Activated CD4-positive, alpha-beta memory T cell treated with anti-CD3 and anti-CD28 coated beads, Interleukin-2, amount 10 ng/mL, durations not matched to agents 7 days and 5 days (primary cell): ENCODE measurements at regions of chr3 and their contacts with region 1.

Region 1: GRCh38 chr3:97821810-97822775 is at the start of gene CRYBG3:
- DNase-seq: peak; percentile 89
- H3K4me3 Mint-ChIP-seq: peak within 1 kb of the TSS; percentile 93
- H3K27ac Mint-ChIP-seq: peak within 1 kb of the TSS; percentile 84
- H3K4me1 Mint-ChIP-seq: peaks cover 40% of the 10 kb centered on the region
- H3K27me3 Mint-ChIP-seq: peaks cover 19% of the 10 kb centered on the region
- total RNA-seq, gene CRYBG3: 12.8 to 13.1 TPM

Region 2: DNA sequence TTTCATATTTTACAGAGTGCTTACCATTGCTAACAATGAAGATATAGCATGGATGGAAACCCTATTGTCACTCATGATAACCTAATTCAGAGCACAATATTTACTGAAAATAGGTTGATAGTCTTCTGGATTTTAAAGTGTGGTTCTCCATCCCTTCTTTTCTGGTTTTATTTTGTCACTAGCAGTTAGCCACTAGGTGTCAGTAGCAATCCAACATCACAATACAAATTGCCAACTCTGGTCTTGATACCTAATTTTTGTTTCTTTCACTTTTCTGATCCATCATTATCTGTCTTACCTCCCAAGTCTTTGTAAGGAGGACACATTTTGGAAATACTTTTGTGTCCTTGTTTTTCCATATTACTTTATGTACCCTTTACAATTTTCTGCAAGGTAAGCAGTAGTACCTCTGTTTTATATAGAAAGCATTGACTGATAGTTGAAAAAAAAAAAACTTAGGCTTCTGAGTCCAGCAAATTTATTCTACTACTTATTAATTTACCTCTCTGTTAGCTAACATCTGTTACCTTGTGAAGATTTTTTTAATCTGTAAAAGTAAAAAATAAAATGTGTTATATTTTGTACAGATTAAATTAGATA is 28.6 kb before region 1 on chr3:
- CTCF ChIA-PET with region 1: interaction called, 10 read pairs
- POLR2A ChIA-PET with region 1: interaction called, 10 read pairs
- DNase-seq: no peak
- H3K4me3 Mint-ChIP-seq: no peak overlapping the region
- H3K27ac Mint-ChIP-seq: no peak overlapping the region
- H3K4me1 Mint-ChIP-seq: peaks cover 3% of the 10 kb centered on the region
- H3K27me3 Mint-ChIP-seq: no peaks in the 10 kb centered on the region

Region 3: GRCh38 chr3:97871801-97872524 is 49.9 kb after region 1 on chr3:
- CTCF ChIA-PET with region 1: interaction called, 9 read pairs
- POLR2A ChIA-PET with region 1: interaction called, 11 read pairs
- DNase-seq: peak; percentile 41
- H3K4me3 Mint-ChIP-seq: peak overlapping the region; percentile 7
- H3K27ac Mint-ChIP-seq: peak overlapping the region; percentile 70
- H3K4me1 Mint-ChIP-seq: peaks cover 25% of the 10 kb centered on the region
- H3K27me3 Mint-ChIP-seq: no peaks in the 10 kb centered on the region

Region 4: DNA sequence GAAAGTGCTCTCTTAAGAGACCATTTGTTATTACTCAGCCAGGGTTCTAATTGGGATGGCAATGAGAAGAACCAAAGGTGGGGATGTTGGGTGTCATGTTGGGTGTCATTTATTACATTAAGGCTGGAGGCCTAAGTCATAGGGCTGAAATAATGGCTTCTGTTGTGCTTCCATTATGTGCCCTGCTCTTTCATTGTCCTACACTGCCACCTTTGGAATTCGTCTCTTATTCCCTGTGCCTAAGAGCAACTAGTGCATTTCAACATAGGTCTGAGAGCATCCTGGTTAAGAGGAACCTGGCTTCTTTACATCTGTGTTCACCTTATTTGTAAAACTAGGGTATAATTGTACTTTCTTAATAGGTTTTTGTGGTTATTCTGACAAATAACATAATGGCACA is 117.9 kb after region 1 on chr3:
- CTCF ChIA-PET with region 1: no interaction called
- POLR2A ChIA-PET with region 1: interaction called, 16 read pairs
- DNase-seq: no peak
- H3K4me3 Mint-ChIP-seq: no peak overlapping the region
- H3K27ac Mint-ChIP-seq: no peak overlapping the region
- H3K4me1 Mint-ChIP-seq: peaks cover 22% of the 10 kb centered on the region
- H3K27me3 Mint-ChIP-seq: no peaks in the 10 kb centered on the region

Region 5: GRCh38 chr3:97971677-97972567 is 149.8 kb after region 1 on chr3 and contains the start of gene RIOX2:
- CTCF ChIA-PET with region 1: interaction called, 17 read pairs
- POLR2A ChIA-PET with region 1: interaction called, 56 read pairs
- DNase-seq: peak; percentile 86
- H3K4me3 Mint-ChIP-seq: peak within 1 kb of the TSS; percentile 86
- H3K27ac Mint-ChIP-seq: peak within 1 kb of the TSS; percentile 93
- H3K4me1 Mint-ChIP-seq: peaks cover 77% of the 10 kb centered on the region
- H3K27me3 Mint-ChIP-seq: no peaks in the 10 kb centered on the region
- total RNA-seq, gene RIOX2: 46.5 to 46.7 TPM

Region 6: DNA sequence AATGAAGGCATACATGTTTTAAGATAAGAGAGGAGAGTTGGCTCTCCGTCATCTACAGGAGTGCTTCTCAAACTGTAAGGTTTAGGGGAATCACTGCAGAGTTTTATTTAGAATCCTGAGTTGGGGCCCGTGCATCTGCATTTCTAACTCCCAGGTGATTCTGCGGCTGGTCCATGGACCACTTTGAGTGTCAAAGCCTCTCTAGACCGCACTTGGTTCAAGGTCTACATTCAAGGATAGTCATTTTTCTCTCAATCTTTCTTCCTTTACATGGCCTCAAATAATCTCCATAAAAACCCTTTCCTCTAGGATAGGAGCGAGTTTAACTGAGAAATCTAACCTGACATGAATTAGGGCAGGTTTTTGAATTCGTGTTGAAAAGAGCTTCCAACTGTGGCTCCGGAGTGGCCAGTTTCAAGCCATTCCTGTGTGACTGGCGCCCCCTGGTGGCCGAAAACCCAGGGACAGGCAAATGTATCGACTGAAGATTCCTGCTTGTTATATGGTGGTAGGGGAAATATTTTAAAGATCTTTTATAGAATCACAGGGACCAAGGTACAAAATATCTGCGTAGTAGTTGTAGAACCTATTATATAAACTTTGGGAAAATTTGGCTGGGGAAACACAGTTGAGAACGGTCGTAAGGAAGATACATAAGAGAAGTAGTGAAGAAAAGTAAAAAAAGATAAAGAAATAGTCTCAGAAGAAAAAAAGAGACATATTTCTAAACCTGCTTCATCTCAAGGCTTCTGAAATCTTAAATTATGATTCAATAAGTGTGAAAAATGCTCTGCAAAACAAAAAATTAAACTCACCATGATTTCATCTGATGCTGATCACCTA is 201.1 kb after region 1 on chr3:
- CTCF ChIA-PET with region 1: interaction called, 7 read pairs
- POLR2A ChIA-PET with region 1: interaction called, 11 read pairs
- DNase-seq: peak; percentile 92
- H3K4me3 Mint-ChIP-seq: no peak overlapping the region
- H3K27ac Mint-ChIP-seq: no peak overlapping the region
- H3K4me1 Mint-ChIP-seq: peaks cover 16% of the 10 kb centered on the region
- H3K27me3 Mint-ChIP-seq: no peaks in the 10 kb centered on the region